ENCODE measurements at regions of chr7 and their contacts with region 1.

Region 1: DNA sequence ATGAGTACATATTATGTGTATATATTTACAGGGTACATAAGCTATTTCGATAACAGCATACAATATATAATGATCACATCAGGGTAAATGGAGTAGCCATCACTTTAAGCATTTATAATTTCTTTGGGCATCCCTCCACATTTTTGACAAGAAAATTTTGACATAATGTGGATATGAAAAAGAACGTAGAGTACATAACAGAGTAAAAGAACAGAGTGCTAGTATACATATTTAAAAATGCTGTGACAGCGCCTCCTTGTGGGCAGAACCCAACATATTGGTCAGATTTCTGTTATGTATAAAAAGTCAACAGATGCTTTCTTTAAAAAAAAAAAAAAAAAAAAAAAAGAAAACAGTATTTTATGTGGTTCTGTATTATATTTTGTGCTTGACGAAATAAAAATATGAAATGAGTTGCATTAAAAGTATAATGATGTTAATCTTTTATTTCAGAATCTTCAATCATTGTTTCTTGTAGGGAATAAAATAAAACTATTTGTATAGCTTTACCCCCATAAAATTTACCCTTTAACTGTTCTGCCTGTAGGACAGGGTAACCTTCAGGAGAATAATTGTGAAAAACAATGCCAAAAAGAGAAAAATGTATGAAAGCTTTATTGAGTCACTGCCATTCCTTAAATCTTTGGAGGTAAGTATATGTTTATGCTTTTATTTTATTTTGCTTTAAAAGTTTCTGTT is 18.3 kb upstream of the HBP1 start:
- DNase-seq: no peak
- H3K4me3 ChIP-seq: no peak overlapping the region
- H3K27ac ChIP-seq: no peak overlapping the region
- H3K4me1 ChIP-seq: peaks cover 0 to 12% (median 0%) of the 10 kb centered on the region in 3 donors
- H3K27me3 ChIP-seq: no peaks in the 10 kb centered on the region
- CTCF ChIP-seq: peak; percentile 44 to 66 (median 56)
- POLR2A ChIP-seq: no peak

Region 2: DNA sequence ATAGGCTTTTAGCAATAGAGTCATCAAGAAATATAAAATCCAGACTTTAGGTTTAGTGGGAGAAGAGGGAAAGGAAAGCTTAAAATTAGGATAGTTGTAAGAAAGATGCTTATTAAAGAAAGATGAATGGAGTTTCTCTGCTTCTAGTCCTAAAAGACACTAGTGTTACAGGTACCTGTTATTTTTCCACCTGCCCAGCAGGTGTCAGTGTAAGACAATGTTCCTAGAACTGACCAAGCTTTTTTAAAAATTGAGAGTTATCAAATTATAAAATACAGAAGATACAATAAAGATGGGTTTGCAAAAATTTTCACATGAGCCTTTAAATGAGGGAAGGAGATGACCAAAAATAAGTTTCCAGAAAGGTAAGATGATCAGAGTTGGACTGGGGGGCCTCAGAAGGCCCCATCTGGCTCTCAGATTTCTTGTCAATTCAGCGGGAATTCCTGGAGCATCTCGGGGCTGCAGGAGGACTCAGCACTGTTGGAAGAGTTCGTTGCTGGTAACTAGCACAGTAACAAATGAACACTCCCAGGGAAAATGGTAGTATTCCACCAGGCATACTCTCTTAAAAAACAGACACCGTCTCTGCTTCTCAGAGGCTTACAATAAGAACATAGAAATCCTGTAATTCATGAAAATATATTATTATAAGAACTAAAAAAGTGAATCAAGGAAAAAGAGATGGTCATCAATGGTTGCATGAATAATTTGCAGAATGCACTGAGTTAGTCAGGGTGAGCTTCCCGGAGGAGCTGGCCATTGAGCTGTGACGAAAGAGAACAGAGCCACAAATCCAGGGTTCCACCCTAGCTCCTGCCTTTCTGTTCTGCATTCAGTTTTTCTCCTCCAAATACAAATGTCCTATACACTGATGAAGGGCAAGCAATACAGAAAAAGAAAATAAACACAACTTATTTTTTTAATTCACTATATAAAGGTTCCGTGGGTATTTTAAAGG is 357.2 kb before region 1 on chr7:
- intact Hi-C with region 1: loop called (anchors 5 kb)
- DNase-seq: no peak
- H3K4me3 ChIP-seq: no peak overlapping the region
- H3K27ac ChIP-seq: no peak overlapping the region
- H3K4me1 ChIP-seq: no peaks in the 10 kb centered on the region
- H3K27me3 ChIP-seq: no peaks in the 10 kb centered on the region
- CTCF ChIP-seq: peak; percentile 12 to 69 (median 54)
- POLR2A ChIP-seq: no peak

Region 3: DNA sequence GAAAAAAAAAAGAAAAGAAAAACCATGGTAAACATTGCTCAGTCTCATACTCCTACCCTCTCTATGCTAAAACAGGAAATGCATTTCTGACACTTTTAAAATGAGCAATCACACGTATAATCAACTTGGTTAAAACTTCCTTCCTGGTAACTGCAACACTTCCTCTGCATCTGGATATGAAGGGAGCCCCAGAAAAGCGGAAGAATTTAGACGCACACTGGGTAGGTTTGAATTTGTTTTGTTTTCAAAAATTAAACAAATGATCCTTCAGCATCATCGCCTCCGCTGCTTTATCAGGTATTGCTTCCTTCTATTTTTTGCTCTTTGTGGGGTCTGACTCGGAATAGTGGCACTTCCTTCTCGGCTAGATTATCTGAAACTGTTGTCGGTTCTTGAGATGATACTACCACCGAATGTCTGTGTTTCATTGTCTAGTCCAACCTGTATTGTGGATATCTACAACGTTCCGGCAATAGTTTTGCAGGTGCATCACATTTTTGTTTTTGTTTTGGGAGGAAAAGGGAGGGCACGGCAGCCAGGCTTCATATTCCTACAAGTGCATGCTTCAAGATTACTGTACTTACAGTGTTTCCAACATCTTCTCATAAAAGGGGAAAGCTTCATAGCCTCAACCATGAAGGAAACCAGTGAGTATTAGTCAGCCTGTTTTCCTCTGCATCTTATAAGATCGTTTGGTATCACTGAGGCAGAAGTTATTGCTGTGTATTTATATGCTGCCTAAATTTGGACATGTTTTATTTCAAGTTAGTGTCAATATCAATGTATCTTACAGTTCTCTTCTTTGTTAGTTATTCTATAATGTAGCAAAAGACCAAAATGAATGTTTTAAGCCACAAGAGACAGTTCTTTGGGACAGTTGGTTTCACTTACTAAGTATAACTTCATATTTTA is 285.1 kb before region 1 on chr7 and contains the start of gene PIK3CG:
- intact Hi-C with region 1: no loop called
- DNase-seq: no peak
- H3K4me3 ChIP-seq: peak within 1 kb of the TSS in 3 of 4 donors; percentile 33 to 52 (median 41)
- H3K27ac ChIP-seq: peak within 1 kb of the TSS in 3 of 4 donors; percentile 34 to 72 (median 62)
- H3K4me1 ChIP-seq: peaks cover 0 to 31% (median 0%) of the 10 kb centered on the region in 3 donors
- H3K27me3 ChIP-seq: no peaks in the 10 kb centered on the region
- CTCF ChIP-seq: no peak
- POLR2A ChIP-seq: no peak
- total RNA-seq, gene PIK3CG: 1.3 to 6.1 (median 2.5) TPM

Region 4: DNA sequence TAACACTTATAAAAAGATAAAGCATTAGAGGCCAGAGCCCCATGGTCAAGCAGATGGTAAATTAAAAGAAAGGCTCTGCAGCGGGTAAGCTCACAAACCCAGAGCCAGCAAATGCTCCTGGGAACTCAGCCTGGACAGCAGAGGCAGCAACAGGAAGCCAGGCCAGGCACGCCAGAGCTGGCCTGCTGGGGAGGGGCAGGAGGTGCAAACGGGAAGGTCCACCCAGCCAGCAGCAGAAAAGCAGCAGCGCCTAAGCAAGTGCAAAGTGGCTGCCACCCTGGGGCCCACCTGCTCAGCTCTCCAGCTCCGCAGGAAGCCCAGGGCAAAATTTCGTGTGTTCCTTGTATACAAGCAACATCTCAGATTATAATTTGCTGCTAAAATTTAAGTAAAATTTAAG is 236.6 kb after region 1 on chr7:
- intact Hi-C with region 1: no loop called
- DNase-seq: no peak
- H3K4me3 ChIP-seq: no peak overlapping the region
- H3K27ac ChIP-seq: peak overlapping the region in 2 of 4 donors; percentile 6 to 18
- H3K4me1 ChIP-seq: peaks cover 0 to 10% (median 4%) of the 10 kb centered on the region in 3 donors
- H3K27me3 ChIP-seq: no peaks in the 10 kb centered on the region
- CTCF ChIP-seq: no peak
- POLR2A ChIP-seq: no peak

Region 5: GRCh38 chr7:107725151-107725740 is 574.7 kb after region 1 on chr7:
- intact Hi-C with region 1: loop called (anchors 10 kb)
- DNase-seq: no peak
- H3K4me3 ChIP-seq: no peak overlapping the region
- H3K27ac ChIP-seq: no peak overlapping the region
- H3K4me1 ChIP-seq: no peaks in the 10 kb centered on the region
- H3K27me3 ChIP-seq: peaks cover 0 to 20% (median 0%) of the 10 kb centered on the region in 4 donors
- CTCF ChIP-seq: peak; percentile 45 to 76 (median 60)
- POLR2A ChIP-seq: no peak

Measured in esophagus squamous epithelium (tissue), 5 donors.